ENCODE measurements at regions of chr3 and their contacts with region 1.

Region 1: DNA sequence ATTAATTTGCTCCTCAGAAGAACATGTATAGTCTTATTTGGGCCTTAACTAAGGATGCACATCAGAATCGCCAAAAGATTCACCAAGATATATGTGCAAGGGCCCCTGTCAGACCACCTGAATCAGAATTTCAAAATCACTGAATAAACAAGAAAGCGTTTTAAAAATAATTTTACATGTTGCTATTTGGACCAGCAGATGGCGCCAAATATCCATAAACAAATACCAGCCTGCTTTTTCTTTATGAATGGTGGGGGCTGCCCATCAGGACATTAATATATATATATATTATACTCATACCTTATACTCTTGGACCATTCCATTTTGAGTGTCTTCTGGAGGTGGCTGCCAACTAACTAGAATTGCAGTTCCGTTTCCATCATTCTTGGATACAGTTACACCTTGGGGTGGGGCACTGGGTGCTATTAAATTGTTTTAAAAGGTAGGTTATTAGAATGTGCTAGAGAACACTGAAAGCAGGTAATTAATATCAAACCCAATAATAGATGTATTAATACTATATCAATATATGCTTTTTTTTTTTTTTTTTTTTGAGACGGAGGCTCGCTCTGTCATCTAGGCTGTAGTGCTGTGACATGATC is 1108.3 kb downstream of the ROBO1 start:
- DNase-seq: peak; percentile 72
- H3K4me3 ChIP-seq: no peak overlapping the region
- H3K27ac ChIP-seq: no peak overlapping the region
- H3K4me1 ChIP-seq: peaks cover 21% of the 10 kb centered on the region
- H3K27me3 ChIP-seq: no peaks in the 10 kb centered on the region
- CTCF ChIP-seq: peak; percentile 72

Region 2: DNA sequence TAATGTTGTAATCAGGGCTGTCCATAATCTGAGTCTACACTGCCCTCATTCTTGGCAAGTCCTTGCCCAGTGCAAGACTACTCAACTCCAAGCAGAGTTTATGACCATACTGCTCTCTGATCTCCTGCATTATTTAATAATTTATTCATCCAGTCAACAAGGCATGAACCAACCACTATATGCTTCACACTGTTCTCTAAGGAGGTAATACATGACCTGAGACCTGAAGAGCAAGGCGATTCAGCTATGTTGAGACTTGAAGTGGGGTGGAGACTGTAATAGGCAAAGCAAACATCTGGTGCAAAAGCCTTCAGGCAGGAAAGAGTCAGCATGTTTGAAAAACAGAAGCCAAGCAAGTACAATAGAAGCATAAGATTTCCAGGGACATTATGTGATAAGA is 256.8 kb before region 1 on chr3:
- CTCF ChIA-PET with region 1: no interaction called
- POLR2A ChIA-PET with region 1: no interaction called
- intact Hi-C with region 1: no loop called
- DNase-seq: no peak
- H3K4me3 ChIP-seq: no peak overlapping the region
- H3K27ac ChIP-seq: no peak overlapping the region
- H3K4me1 ChIP-seq: peaks cover 10% of the 10 kb centered on the region
- H3K27me3 ChIP-seq: no peaks in the 10 kb centered on the region
- CTCF ChIP-seq: no peak

Region 3: GRCh38 chr3:78690766-78691165 is 31.3 kb after region 1 on chr3:
- CTCF ChIA-PET with region 1: no interaction called
- POLR2A ChIA-PET with region 1: interaction called, 13 read pairs
- intact Hi-C with region 1: no loop called
- DNase-seq: no peak
- H3K4me3 ChIP-seq: no peak overlapping the region
- H3K27ac ChIP-seq: no peak overlapping the region
- H3K4me1 ChIP-seq: peaks cover 26% of the 10 kb centered on the region
- H3K27me3 ChIP-seq: no peaks in the 10 kb centered on the region
- CTCF ChIP-seq: no peak

Region 4: GRCh38 chr3:78804251-78805037 is 145.0 kb after region 1 on chr3:
- CTCF ChIA-PET with region 1: no interaction called
- POLR2A ChIA-PET with region 1: no interaction called
- intact Hi-C with region 1: no loop called
- DNase-seq: peak; percentile 75
- H3K4me3 ChIP-seq: no peak overlapping the region
- H3K27ac ChIP-seq: peak overlapping the region; percentile 26
- H3K4me1 ChIP-seq: peaks cover 40% of the 10 kb centered on the region
- H3K27me3 ChIP-seq: no peaks in the 10 kb centered on the region
- CTCF ChIP-seq: no peak

Region 5: GRCh38 chr3:78978037-78978436 is 318.6 kb after region 1 on chr3:
- CTCF ChIA-PET with region 1: no interaction called
- POLR2A ChIA-PET with region 1: no interaction called
- intact Hi-C with region 1: loop called (anchors 2 kb)
- DNase-seq: peak; percentile 68
- H3K4me3 ChIP-seq: peak overlapping the region; percentile 37
- H3K27ac ChIP-seq: peak overlapping the region; percentile 62
- H3K4me1 ChIP-seq: peaks cover 80% of the 10 kb centered on the region
- H3K27me3 ChIP-seq: no peaks in the 10 kb centered on the region
- CTCF ChIP-seq: peak; percentile 69

Region 6: DNA sequence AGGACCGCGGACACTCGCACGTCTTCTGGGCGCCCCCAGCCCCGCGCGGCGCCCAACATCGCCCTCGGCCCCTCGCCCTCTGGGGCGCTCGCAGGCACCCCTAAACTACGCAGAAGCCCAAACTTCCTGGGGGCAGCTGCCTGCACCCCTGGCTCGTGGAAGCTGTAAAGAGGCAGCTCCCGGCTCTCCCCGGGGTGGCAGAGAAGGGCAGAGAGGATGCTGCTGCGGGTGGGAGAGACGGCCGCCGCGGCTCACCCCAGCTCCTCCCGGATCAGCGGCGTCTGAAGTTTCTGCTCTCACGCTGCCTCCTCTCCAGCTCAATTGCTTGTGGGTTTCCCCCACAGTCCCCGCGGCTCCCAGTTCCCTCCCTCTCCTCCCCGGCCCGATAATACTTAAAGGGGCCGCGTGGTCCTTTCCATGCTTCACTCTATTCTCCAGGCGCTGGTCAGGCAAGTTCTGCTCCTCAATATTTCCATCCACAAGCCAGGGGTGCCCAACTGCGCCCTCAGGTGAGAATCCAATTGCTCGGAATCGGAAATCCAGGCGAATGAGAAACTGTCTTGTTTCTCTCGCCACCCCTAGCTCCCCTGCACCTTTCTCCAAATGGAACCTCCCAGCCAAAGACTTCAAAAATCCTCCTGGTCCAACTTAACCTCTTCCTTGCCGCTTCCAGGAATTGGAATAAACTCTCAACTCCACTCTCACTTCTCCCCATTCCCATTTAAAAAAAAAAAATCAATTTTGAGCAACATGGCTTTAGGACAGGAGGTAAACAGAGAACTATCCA is 359.8 kb after region 1 on chr3:
- CTCF ChIA-PET with region 1: no interaction called
- POLR2A ChIA-PET with region 1: no interaction called
- intact Hi-C with region 1: loop called (anchors 5 kb)
- DNase-seq: peak; percentile 96
- H3K4me3 ChIP-seq: peak overlapping the region; percentile 91
- H3K27ac ChIP-seq: peak overlapping the region; percentile 99
- H3K4me1 ChIP-seq: peaks cover 29% of the 10 kb centered on the region
- H3K27me3 ChIP-seq: no peaks in the 10 kb centered on the region
- CTCF ChIP-seq: no peak

Region 7: GRCh38 chr3:79032686-79033318 is 373.3 kb after region 1 on chr3:
- CTCF ChIA-PET with region 1: no interaction called
- POLR2A ChIA-PET with region 1: no interaction called
- intact Hi-C with region 1: loop called (anchors 2 kb)
- DNase-seq: peak; percentile 87
- H3K4me3 ChIP-seq: no peak overlapping the region
- H3K27ac ChIP-seq: no peak overlapping the region
- H3K4me1 ChIP-seq: peaks cover 2% of the 10 kb centered on the region
- H3K27me3 ChIP-seq: no peaks in the 10 kb centered on the region
- CTCF ChIP-seq: peak; percentile 73

Region 8: GRCh38 chr3:79361748-79362378 is 702.4 kb after region 1 on chr3:
- CTCF ChIA-PET with region 1: no interaction called
- POLR2A ChIA-PET with region 1: no interaction called
- intact Hi-C with region 1: loop called (anchors 1 kb)
- DNase-seq: peak; percentile 58
- H3K4me3 ChIP-seq: no peak overlapping the region
- H3K27ac ChIP-seq: no peak overlapping the region
- H3K4me1 ChIP-seq: peaks cover 4% of the 10 kb centered on the region
- H3K27me3 ChIP-seq: no peaks in the 10 kb centered on the region
- CTCF ChIP-seq: peak; percentile 81